ENCODE measurements at regions of chr5 and their contacts with region 1.

Region 1: DNA sequence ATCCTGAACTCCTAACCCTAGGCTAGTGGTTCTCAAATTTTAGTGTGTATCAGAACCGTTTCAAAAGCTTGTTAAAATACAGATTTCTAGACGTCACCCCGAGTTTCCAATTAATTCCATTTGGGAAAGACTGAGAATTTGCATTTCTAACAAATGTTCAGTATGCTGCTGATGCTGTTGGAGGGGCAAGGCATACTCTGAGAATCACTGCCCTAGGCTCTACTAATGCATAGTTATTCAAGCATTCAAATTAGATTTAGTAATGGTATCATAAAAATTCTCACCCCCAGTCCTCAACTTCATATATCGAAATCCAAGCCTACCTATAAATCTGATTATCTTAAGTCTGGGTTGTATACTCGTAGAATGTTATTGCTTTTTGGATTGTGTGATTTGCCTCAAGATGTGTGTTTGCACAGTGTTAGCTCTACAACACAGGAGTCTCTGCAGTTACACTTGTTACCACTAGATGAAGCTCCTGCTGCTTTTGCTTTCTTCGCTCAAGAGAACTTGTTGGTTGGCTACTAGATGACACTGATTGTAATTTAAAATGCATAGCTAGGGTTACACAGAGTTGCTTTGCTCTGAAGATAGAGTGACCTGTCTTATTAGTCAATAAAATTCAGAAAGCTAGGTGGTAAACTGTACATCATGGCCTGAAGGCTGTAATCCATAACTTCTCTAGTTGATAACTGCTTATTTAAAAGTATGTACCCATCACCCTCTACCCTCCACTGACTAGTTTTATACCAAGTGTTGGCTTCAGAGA is 7.5 kb upstream of the ERAP2 start:
- DNase-seq: peak; percentile 58
- ATAC-seq: peak; percentile 95
- H3K4me3 Mint-ChIP-seq: no peak overlapping the region
- H3K27ac Mint-ChIP-seq: no peak overlapping the region
- H3K4me1 Mint-ChIP-seq: peaks cover 50% of the 10 kb centered on the region
- H3K27me3 Mint-ChIP-seq: peaks cover 2% of the 10 kb centered on the region

Region 2: GRCh38 chr5:96816411-96816939 is 52.3 kb before region 1 on chr5:
- CTCF ChIA-PET with region 1: interaction called, 27 read pairs
- POLR2A ChIA-PET with region 1: no interaction called
- DNase-seq: peak; percentile 76
- ATAC-seq: peak; percentile 83
- H3K4me3 Mint-ChIP-seq: peak overlapping the region; percentile 77
- H3K27ac Mint-ChIP-seq: peak overlapping the region; percentile 89
- H3K4me1 Mint-ChIP-seq: peaks cover 68% of the 10 kb centered on the region
- H3K27me3 Mint-ChIP-seq: no peaks in the 10 kb centered on the region

Region 3: GRCh38 chr5:96885518-96886338 is 16.9 kb after region 1 on chr5:
- CTCF ChIA-PET with region 1: interaction called, 106 read pairs
- POLR2A ChIA-PET with region 1: interaction called, 9 read pairs
- DNase-seq: peak; percentile 61
- ATAC-seq: peak; percentile 84
- H3K4me3 Mint-ChIP-seq: peak overlapping the region; percentile 44
- H3K27ac Mint-ChIP-seq: peak overlapping the region; percentile 81
- H3K4me1 Mint-ChIP-seq: peaks cover 66% of the 10 kb centered on the region
- H3K27me3 Mint-ChIP-seq: no peaks in the 10 kb centered on the region

Region 4: GRCh38 chr5:96934708-96935558 is 66.1 kb after region 1 on chr5:
- CTCF ChIA-PET with region 1: interaction called, 24 read pairs
- POLR2A ChIA-PET with region 1: interaction called, 10 read pairs
- DNase-seq: peak; percentile 96
- ATAC-seq: peak; percentile 77
- H3K4me3 Mint-ChIP-seq: peak overlapping the region; percentile 88
- H3K27ac Mint-ChIP-seq: peak overlapping the region; percentile 98
- H3K4me1 Mint-ChIP-seq: peaks cover 51% of the 10 kb centered on the region
- H3K27me3 Mint-ChIP-seq: no peaks in the 10 kb centered on the region

Region 5: GRCh38 chr5:96997265-96997859 is 128.6 kb after region 1 on chr5:
- CTCF ChIA-PET with region 1: interaction called, 29 read pairs
- POLR2A ChIA-PET with region 1: no interaction called
- DNase-seq: peak; percentile 51
- ATAC-seq: peak; percentile 54
- H3K4me3 Mint-ChIP-seq: no peak overlapping the region
- H3K27ac Mint-ChIP-seq: no peak overlapping the region
- H3K4me1 Mint-ChIP-seq: peaks cover 43% of the 10 kb centered on the region
- H3K27me3 Mint-ChIP-seq: no peaks in the 10 kb centered on the region

Region 6: GRCh38 chr5:97162045-97162444 is 293.3 kb after region 1 on chr5:
- CTCF ChIA-PET with region 1: interaction called, 101 read pairs
- POLR2A ChIA-PET with region 1: no interaction called
- DNase-seq: peak; percentile 72
- ATAC-seq: peak; percentile 60
- H3K4me3 Mint-ChIP-seq: no peak overlapping the region
- H3K27ac Mint-ChIP-seq: no peak overlapping the region
- H3K4me1 Mint-ChIP-seq: peaks cover 8% of the 10 kb centered on the region
- H3K27me3 Mint-ChIP-seq: no peaks in the 10 kb centered on the region